Activated CD4-positive, alpha-beta memory T cell treated with anti-CD3 and anti-CD28 coated beads for 36 hours (primary cell): ENCODE measurements at regions of chr5 and their contacts with region 1.

Region 1: DNA sequence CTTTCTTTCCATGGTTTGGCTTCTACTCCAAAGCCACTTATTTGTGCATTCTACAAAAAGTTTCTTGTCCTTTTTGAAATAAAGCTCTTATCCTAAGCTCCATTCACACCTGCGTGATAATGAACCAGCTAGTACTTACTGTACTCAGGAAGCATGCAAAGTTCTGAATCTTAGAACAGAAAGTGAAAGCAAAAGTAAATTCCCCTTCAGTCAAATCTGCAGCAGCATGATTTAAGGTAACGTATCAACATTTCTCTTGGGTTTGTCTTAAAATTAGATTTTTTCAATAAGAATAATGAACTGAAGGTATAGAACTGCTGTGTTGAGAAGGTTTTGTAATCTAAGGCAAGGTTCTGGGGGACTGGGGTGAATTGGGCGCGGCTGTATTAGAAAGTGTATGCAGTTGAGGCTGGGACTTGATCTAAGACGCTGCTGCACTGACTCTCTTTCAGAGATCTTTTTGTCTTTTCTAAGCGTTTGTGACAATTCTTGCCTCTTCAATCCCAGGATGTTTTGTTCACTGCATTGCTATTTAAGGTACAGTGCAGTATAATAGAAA is at the start of gene ERAP2:
- DNase-seq: peak; percentile 30
- H3K4me3 Mint-ChIP-seq: peak within 1 kb of the TSS; percentile 96
- H3K27ac Mint-ChIP-seq: peak within 1 kb of the TSS; percentile 97
- H3K4me1 Mint-ChIP-seq: peaks cover 63% of the 10 kb centered on the region
- H3K27me3 Mint-ChIP-seq: no peaks in the 10 kb centered on the region
- total RNA-seq, gene ERAP2: 44.8 to 48.9 TPM

Region 2: GRCh38 chr5:96861076-96861475 is 15.3 kb before region 1 on chr5:
- CTCF ChIA-PET with region 1: no interaction called
- POLR2A ChIA-PET with region 1: no interaction called
- intact Hi-C with region 1: loop called (anchors 1 kb)
- DNase-seq: no peak
- H3K4me3 Mint-ChIP-seq: no peak overlapping the region
- H3K27ac Mint-ChIP-seq: no peak overlapping the region
- H3K4me1 Mint-ChIP-seq: peaks cover 19% of the 10 kb centered on the region
- H3K27me3 Mint-ChIP-seq: no peaks in the 10 kb centered on the region

Region 3: GRCh38 chr5:96919754-96920197 is 43.4 kb after region 1 on chr5:
- CTCF ChIA-PET with region 1: interaction called, 3 read pairs
- POLR2A ChIA-PET with region 1: no interaction called
- intact Hi-C with region 1: loop called (anchors 2 kb)
- DNase-seq: peak; percentile 33
- H3K4me3 Mint-ChIP-seq: no peak overlapping the region
- H3K27ac Mint-ChIP-seq: no peak overlapping the region
- H3K4me1 Mint-ChIP-seq: peaks cover 36% of the 10 kb centered on the region
- H3K27me3 Mint-ChIP-seq: no peaks in the 10 kb centered on the region